ENCODE measurements at regions of chr2 and their contacts with region 1.

Region 1: DNA sequence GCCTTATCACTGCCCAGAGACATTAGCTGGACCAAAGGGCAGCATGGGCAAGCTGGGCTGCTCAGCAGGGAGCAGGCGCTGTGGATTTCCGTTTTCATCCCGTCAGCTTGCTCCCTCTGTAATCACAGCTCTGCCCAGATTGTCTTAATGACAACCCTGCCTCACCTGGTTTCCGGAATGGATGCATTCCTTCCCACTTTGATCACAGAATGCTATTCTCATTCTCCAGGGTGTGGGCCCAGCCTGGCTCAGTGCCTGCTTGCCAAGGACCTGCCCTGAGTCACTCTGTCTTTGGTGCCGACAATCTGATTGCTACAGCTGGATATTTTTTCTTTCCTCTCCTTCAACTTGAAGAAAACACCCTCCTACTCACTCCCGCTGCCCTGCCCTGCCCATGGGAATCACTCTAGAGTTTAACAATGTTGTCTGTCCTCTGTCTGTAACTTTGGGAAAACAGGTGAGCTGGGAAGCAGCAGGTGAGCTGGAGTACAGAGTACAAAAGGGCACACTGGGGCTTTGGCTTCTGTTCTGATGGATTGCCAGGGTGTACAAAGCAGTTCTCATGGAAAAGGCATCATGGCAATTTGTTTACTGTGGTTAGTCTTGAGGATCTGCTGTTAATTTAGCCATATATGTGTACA is 27.2 kb upstream of the FAM136A start:
- DNase-seq: no peak
- ATAC-seq: no peak
- H3K4me3 ChIP-seq: no peak overlapping the region
- H3K27ac ChIP-seq: no peak overlapping the region
- H3K4me1 ChIP-seq: no peaks in the 10 kb centered on the region
- H3K27me3 ChIP-seq: peaks cover 20% of the 10 kb centered on the region
- CTCF ChIP-seq: no peak
- POLR2A ChIP-seq: no peak
- RAD21 ChIP-seq: no peak

Region 2: GRCh38 chr2:70630761-70631160 is 301.7 kb after region 1 on chr2:
- CTCF ChIA-PET with region 1: no interaction called
- POLR2A ChIA-PET with region 1: no interaction called
- dilution Hi-C with region 1: no loop called
- in situ Hi-C with region 1: no loop called
- intact Hi-C with region 1: loop called (anchors 5 kb)
- DNase-seq: no peak
- ATAC-seq: no peak
- H3K4me3 ChIP-seq: no peak overlapping the region
- H3K27ac ChIP-seq: no peak overlapping the region
- H3K4me1 ChIP-seq: no peaks in the 10 kb centered on the region
- H3K27me3 ChIP-seq: peaks cover 6% of the 10 kb centered on the region
- CTCF ChIP-seq: no peak
- POLR2A ChIP-seq: no peak
- RAD21 ChIP-seq: no peak

Measured in IMR-90 (cell line).